Breast epithelium (tissue), 4 donors: ENCODE measurements at regions of chr2 and their contacts with region 1.

Region 1: GRCh38 chr2:221380062-221380461 is 192.0 kb downstream of the EPHA4 start:
- DNase-seq: no peak
- H3K4me3 ChIP-seq: no peak overlapping the region
- H3K27ac ChIP-seq: no peak overlapping the region
- H3K4me1 ChIP-seq: no peaks in the 10 kb centered on the region
- H3K27me3 ChIP-seq: no peaks in the 10 kb centered on the region
- CTCF ChIP-seq: no peak
- POLR2A ChIP-seq: no peak

Region 2: DNA sequence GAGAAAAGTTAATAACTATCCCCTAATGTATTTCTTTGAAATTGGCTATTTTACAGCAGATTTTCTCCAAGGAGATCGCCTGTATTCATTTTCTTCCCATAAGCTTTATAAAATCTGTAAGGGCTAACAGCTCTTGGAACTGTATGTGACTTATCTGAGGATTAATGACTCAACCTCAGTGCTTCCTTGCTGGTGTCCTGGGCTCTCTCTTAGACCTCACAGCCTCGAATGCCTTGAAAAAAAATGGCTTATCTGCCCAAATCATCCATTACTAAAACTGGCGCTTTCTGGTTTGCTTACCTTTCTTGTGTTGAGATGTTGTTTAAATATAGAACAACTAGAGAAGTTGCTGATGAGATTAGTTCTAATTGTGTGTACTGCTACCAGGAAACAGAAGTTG is 1039.0 kb before region 1 on chr2:
- intact Hi-C with region 1: loop called (anchors 5 kb)
- DNase-seq: no peak
- H3K4me3 ChIP-seq: no peak overlapping the region
- H3K27ac ChIP-seq: no peak overlapping the region
- H3K4me1 ChIP-seq: no peaks in the 10 kb centered on the region
- H3K27me3 ChIP-seq: no peaks in the 10 kb centered on the region
- CTCF ChIP-seq: no peak
- POLR2A ChIP-seq: no peak

Region 3: DNA sequence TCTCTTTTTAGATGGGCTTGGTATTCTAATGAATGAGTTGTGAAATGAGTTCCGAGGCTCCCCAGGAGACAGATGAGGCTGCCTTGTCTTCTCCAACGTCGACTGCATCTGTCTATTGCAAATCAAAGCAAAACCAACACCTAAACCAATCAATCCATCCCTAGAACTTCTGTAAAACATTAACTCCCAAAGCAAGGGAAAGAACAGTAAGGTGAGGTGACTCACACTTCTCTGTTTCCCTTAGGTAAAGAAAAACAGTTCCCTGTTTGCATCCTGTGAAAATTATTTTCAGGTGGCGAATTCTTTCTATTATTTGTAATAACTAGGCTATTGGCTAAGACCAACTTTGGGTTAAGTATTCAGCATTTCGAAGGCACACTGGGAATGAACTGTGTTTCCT is 57.3 kb before region 1 on chr2:
- intact Hi-C with region 1: no loop called
- DNase-seq: no peak
- H3K4me3 ChIP-seq: no peak overlapping the region
- H3K27ac ChIP-seq: no peak overlapping the region
- H3K4me1 ChIP-seq: no peaks in the 10 kb centered on the region
- H3K27me3 ChIP-seq: no peaks in the 10 kb centered on the region
- CTCF ChIP-seq: no peak
- POLR2A ChIP-seq: no peak

Region 4: DNA sequence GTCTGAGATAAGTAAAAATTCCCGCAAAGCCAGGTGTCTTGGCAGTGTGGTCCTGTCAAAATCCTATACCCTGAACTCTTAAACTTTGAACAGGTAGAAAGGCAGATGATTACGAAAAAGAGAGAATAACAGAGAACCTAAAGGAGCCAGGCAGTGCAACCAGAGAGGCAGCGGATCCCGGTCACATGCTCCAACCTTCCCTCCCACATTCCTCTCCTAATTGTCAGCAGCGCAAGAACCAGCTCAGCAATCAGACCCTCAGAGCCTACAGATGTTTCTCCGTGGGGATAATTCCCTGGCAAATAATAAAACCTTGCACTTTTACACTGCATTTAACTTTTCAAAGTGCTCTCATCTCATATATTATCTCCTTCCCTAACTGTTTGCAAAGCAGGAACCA is 67.2 kb after region 1 on chr2:
- intact Hi-C with region 1: no loop called
- DNase-seq: no peak
- H3K4me3 ChIP-seq: no peak overlapping the region
- H3K27ac ChIP-seq: no peak overlapping the region
- H3K4me1 ChIP-seq: no peaks in the 10 kb centered on the region
- H3K27me3 ChIP-seq: no peaks in the 10 kb centered on the region
- CTCF ChIP-seq: no peak
- POLR2A ChIP-seq: no peak